ENCODE measurements at regions of chr19 and their contacts with region 1.

Region 1: DNA sequence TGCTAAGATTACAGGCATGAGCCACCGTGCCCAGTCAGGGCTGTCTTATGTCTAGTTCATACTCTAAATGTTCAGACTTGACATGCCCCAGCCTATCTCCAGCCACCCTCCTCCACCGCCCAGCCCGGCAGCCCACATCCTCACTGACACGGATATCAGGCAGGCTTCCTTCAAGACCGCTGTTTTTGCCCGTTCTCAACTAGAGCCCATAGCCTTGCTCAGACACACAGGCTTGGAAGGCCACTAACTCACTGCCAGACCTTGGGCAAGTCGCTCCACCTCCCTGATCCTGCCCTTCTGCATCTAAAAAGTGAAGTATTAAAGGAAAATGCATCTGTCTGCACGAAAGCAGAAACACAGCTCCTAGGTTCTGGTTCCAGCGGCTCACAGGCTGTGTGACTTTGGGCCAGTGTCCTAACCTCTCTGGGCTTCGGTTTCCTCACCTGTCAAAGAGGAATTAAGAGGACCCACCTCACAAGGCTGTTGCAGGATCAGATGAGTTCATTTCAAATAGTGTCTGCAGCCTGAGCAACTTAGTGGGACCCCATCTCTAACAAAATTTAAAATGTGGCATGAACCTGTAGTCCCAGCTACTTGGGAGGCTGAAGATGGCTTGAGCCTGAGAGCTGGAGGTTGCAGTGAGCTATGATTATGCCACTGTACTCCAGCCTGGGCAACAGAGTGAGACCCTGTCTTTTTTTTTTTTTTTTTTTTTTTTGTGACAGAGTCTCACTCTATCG is 14.5 kb upstream of the CERS4 start:
- DNase-seq: peak; percentile 85
- ATAC-seq: peak; percentile 80
- H3K4me3 Mint-ChIP-seq: peak overlapping the region; percentile 73
- H3K27ac Mint-ChIP-seq: peak overlapping the region; percentile 99
- H3K4me1 Mint-ChIP-seq: peaks cover 54% of the 10 kb centered on the region
- H3K27me3 Mint-ChIP-seq: no peaks in the 10 kb centered on the region

Region 2: GRCh38 chr19:8208922-8209461 is 14.3 kb after region 1 on chr19 and contains the start of gene CERS4:
- CTCF ChIA-PET with region 1: interaction called, 3 read pairs
- POLR2A ChIA-PET with region 1: interaction called, 27 read pairs
- DNase-seq: peak; percentile 80
- ATAC-seq: peak; percentile 86
- H3K4me3 Mint-ChIP-seq: peak within 1 kb of the TSS; percentile 77
- H3K27ac Mint-ChIP-seq: peak within 1 kb of the TSS; percentile 78
- H3K4me1 Mint-ChIP-seq: peaks cover 44% of the 10 kb centered on the region
- H3K27me3 Mint-ChIP-seq: no peaks in the 10 kb centered on the region
- total RNA-seq, gene CERS4: 27.7 to 28.1 TPM

Region 3: DNA sequence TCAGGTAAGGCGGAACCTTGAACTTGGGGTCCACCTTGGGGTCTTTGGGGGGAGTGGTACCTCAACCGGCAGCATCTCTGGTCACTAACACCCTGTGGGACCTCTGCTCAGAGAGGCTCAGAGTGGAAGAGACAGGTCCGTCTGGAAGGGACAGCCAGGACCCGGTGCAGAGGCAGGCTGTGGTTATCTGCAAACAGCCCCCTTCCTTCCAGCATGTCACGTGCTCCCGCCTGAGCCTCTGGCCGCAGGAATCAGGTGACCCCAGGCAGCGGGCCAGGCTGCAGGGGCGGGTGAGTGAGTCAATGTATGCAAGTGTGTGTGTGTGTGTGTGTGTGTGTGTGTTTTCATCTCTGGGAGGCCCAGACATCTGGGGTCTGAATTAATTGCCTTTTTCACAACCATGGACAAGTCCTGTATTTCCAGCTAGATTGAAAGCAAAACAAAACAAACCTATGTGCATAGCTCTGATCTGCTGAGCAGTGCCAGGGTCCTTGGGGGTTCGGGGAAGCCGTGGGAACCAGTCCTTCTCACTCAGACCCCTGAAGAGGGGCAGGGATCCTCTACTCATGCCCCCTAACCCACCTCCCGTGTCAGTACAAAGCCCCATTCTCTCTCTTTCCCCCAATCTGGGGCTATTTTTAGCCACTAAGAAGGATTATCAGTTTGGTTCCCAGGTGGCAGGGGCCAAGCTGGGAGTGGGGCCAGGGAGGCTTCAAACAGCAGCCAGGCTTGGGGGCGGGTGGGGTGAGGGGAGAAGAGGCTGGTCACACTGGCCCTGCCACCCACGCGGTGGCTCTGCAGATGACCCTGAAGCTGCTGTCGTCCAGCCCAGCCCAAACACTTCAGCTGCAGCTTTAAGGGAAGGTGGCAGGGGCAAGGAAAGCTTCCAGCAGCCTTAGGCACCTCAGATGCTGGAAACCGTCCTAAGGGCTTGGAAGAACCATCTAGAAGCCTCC is 45.9 kb after region 1 on chr19:
- CTCF ChIA-PET with region 1: no interaction called
- POLR2A ChIA-PET with region 1: interaction called, 13 read pairs
- DNase-seq: peak; percentile 82
- ATAC-seq: peak; percentile 86
- H3K4me3 Mint-ChIP-seq: peak overlapping the region; percentile 34
- H3K27ac Mint-ChIP-seq: peak overlapping the region; percentile 73
- H3K4me1 Mint-ChIP-seq: peaks cover 16% of the 10 kb centered on the region
- H3K27me3 Mint-ChIP-seq: no peaks in the 10 kb centered on the region

Region 4: DNA sequence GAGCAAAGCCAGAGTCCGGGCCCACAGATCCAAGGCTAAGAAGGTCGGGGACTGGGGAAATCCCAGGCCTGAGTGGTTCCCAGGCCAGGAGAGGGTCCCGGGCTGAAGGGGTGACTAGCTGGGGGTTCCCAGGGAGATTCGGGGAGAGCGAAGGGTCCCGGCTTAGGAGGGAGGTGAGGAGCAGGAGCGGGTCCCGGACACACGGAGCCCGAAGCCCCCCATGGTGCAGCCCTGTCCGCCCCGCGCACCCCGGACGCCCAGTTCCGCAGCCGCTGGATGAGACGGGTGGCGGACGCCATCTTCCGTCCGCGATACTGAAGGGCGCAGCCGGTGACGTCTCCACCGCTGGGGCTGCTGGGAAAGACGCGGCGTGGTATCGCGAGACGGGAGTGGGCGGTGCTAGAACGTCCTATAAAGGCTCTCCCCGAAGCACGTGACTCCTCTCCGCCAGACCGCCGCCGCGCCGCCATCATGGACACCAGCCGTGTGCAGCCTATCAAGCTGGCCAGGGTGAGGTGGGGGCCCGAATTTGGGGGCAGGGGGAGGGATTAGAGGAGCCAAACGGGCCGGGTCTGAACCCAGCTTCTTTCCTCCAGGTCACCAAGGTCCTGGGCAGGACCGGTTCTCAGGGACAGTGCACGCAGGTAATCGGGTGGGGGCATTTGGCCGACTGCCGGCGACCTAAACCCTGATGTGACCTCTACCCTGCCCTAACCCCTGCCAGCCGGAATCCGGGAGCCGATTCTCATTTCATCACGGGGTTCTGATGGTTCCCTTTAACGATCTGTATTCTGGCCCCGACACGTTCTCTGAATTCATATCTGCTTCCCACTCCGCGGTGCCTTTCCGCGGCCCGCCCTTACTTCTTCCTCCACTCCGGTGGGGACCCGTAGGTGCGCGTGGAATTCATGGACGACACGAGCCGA is 126.6 kb after region 1 on chr19 and contains the starts of genes NDUFA7 and RPS28:
- CTCF ChIA-PET with region 1: no interaction called
- POLR2A ChIA-PET with region 1: no interaction called
- DNase-seq: peak; percentile 98
- ATAC-seq: peak; percentile 93
- H3K4me3 Mint-ChIP-seq: peak within 1 kb of the TSS; percentile 100
- H3K27ac Mint-ChIP-seq: peak within 1 kb of the TSS; percentile 100
- H3K4me1 Mint-ChIP-seq: peaks cover 47% of the 10 kb centered on the region
- H3K27me3 Mint-ChIP-seq: no peaks in the 10 kb centered on the region
- total RNA-seq, gene NDUFA7: 56.0 to 63.8 TPM
- total RNA-seq, gene RPS28: 1,476 to 1,561 TPM

Measured in activated CD8-positive, alpha-beta T cell treated with anti-CD3 and anti-CD28 coated beads, Interleukin-2, amount 10 ng/mL, durations not matched to agents 7 days and 5 days (primary cell).